CD14-positive monocyte (primary cell): ENCODE measurements at regions of chr16 and their contacts with region 1.

Region 1: GRCh38 chr16:50741808-50742575 is at the start of gene CYLD:
- DNase-seq: peak; percentile 99 to 100 (median 100)
- H3K4me3 ChIP-seq: peak within 1 kb of the TSS; percentile 84 to 92 (median 92)
- H3K4me3 Mint-ChIP-seq: peak within 1 kb of the TSS; percentile 82 to 88
- H3K27ac ChIP-seq: peak within 1 kb of the TSS; percentile 93 to 99
- H3K27ac Mint-ChIP-seq: peak within 1 kb of the TSS; percentile 94 to 98 (median 97)
- H3K4me1 ChIP-seq: peaks cover 25 to 43% of the 10 kb centered on the region in 2 donors
- H3K4me1 Mint-ChIP-seq: peaks cover 48% of the 10 kb centered on the region
- H3K27me3 ChIP-seq: no peaks in the 10 kb centered on the region
- H3K27me3 Mint-ChIP-seq: peaks cover 0 to 2% (median 0%) of the 10 kb centered on the region in 3 donors
- CTCF ChIP-seq: no peak
- polyA plus RNA-seq, gene CYLD: 32.1 to 57.9 (median 35.9) TPM

Region 2: GRCh38 chr16:50273681-50274325 is 468.2 kb before region 1 on chr16:
- intact Hi-C with region 1: loop called in 1 of 2 experiments (anchors 5 kb)
- DNase-seq: peak; percentile 78 to 80 (median 79)
- H3K4me3 ChIP-seq: peak overlapping the region; percentile 67 to 86 (median 68)
- H3K4me3 Mint-ChIP-seq: peak overlapping the region; percentile 99 to 100
- H3K27ac ChIP-seq: peak overlapping the region; percentile 93 to 97
- H3K27ac Mint-ChIP-seq: peak overlapping the region; percentile 98 to 100 (median 100)
- H3K4me1 ChIP-seq: peaks cover 95 to 96% of the 10 kb centered on the region in 2 donors
- H3K4me1 Mint-ChIP-seq: peaks cover 90% of the 10 kb centered on the region
- H3K27me3 ChIP-seq: no peaks in the 10 kb centered on the region
- H3K27me3 Mint-ChIP-seq: no peaks in the 10 kb centered on the region
- CTCF ChIP-seq: no peak

Region 3: DNA sequence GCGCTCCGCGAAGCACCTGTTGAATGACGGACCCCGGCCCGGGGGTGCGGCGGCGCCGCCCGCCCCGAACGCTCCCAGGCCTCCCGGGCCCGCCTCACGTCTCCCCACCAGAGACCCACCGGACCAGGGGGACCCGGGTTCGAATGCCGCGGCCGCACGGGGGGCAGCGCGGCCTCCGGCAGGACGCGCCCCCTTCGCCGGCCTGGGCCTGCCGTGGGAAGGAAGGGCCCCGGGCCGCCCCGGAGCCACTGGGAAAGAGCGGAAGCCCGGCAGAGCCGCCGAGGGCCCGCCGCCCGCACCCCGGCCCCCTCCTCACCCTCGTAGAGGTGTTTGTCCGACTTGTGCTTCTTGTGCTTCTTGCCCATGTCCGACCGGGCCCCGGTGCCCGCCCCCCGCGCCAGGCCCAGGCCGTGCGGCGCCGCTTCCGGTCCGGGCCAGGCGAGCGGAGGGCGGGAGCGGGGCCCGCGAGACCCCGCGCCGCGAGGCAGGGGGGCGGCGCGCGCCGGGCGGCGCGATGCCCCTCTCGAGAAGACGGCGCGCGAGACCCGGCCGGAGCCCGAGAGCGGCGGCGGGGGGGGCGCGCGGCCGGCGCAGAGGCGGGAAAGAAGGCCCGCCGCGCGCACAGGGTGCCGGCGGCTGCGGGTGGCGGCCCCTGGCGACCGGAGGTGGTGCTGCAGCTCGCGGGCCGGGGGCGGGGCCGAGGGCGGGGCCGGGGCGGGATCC is 373.4 kb before region 1 on chr16 and contains the start of gene BRD7:
- intact Hi-C with region 1: loop called in 1 of 2 experiments (anchors 5 kb)
- DNase-seq: peak; percentile 34 to 59 (median 44)
- H3K4me3 ChIP-seq: peak within 1 kb of the TSS; percentile 49 to 95 (median 85)
- H3K4me3 Mint-ChIP-seq: peak within 1 kb of the TSS; percentile 89 to 92
- H3K27ac ChIP-seq: peak within 1 kb of the TSS in 1 of 2 donors; percentile 69
- H3K27ac Mint-ChIP-seq: peak within 1 kb of the TSS; percentile 74 to 95 (median 86)
- H3K4me1 ChIP-seq: peaks cover 32 to 34% of the 10 kb centered on the region in 2 donors
- H3K4me1 Mint-ChIP-seq: peaks cover 37% of the 10 kb centered on the region
- H3K27me3 ChIP-seq: no peaks in the 10 kb centered on the region
- H3K27me3 Mint-ChIP-seq: peaks cover 1 to 6% (median 3%) of the 10 kb centered on the region in 3 donors
- CTCF ChIP-seq: no peak
- polyA plus RNA-seq, gene BRD7: 11.4 to 33.0 (median 21.2) TPM

Region 4: DNA sequence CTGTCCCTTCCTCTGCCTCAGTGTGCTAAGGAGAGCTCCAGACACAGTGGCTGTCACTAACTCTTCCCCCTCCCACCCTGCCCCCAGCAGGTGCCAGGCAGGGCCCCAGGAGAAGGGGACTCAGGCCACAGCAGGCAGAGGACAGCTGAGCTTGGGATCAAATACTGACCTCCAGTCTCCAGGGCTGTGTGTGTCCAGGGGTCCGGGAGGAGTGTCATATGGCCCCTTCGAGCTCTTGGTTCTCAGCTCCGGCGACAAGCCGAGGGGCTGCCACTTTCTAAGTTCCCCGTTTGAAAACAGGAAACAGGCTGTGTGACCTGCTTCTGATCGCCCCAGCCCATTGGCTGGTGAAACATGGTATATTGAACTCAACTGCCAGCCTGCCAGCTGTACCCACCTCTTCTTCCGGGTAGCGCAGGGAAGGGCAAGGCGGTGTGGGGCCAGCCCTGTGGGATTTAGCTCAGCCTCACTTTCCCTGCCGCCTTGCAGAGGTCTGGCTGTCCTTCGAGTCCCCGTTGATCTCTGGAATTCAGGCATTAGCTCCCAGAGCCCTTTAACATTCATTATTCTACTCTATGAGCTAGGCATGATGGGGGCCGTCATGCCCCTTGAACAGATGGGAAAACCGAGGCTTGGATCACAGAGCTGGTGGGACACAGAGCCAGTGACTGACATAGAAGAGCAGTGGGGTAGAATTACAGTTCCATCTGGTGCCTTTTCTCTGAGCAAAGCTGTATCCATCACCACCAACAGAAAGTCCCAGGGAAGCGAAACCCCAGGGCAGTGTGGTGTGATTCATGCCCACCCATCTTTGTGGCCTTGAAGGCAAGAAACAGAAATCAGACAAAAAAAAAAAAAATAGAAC is 60.7 kb before region 1 on chr16 and contains the start of gene SNX20:
- intact Hi-C with region 1: loop called in 1 of 2 experiments (anchors 5 kb)
- DNase-seq: peak; percentile 80 to 90 (median 86)
- H3K4me3 ChIP-seq: peak within 1 kb of the TSS; percentile 51 to 92 (median 84)
- H3K4me3 Mint-ChIP-seq: peak within 1 kb of the TSS; percentile 80 to 95
- H3K27ac ChIP-seq: peak within 1 kb of the TSS; percentile 86 to 100
- H3K27ac Mint-ChIP-seq: peak within 1 kb of the TSS; percentile 96 to 100 (median 98)
- H3K4me1 ChIP-seq: peaks cover 82 to 92% of the 10 kb centered on the region in 2 donors
- H3K4me1 Mint-ChIP-seq: peaks cover 81% of the 10 kb centered on the region
- H3K27me3 ChIP-seq: no peaks in the 10 kb centered on the region
- H3K27me3 Mint-ChIP-seq: peaks cover 0 to 6% (median 2%) of the 10 kb centered on the region in 3 donors
- CTCF ChIP-seq: no peak
- polyA plus RNA-seq, gene SNX20: 51.0 to 83.2 (median 52.0) TPM

Region 5: DNA sequence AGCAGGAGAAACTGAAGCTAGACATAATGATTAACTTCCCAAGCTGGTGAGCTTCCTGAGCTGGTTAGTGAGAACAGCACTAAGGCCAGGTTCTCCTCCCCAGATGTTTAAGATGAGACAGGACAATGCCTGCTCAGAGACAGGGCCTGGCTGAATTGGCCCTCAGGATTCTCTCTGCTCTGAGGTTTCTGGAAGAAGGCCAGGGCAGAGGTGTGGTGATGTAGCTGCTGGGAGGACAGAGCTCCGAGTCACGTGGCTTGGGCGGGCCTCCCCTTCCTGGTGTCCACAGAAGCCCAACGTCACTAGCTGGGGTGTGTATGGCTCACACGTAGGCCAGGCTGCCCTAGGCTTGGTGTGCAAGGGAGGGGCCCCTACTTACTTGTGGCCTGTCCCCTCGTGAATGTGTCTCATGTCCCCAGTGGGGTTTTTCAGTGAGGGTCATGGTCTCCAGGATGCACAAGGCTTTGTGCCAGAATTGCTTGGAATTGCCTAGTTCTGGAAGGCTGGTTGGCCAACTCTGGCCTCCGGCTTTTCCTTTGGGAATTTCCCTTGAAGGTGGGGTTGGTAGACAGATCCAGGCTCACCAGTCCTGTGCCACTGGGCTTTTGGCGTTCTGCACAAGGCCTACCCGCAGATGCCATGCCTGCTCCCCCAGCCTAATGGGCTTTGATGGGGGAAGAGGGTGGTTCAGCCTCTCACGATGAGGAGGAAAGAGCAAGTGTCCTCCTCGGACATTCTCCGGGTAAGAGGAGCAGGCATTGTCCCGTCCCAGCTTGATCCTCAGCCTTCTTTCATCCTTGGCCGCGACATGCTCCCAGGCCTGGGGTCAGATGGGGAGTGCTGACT is 45.2 kb before region 1 on chr16:
- intact Hi-C with region 1: loop called (anchors 5 kb)
- DNase-seq: peak; percentile 98 to 100 (median 99)
- H3K4me3 ChIP-seq: peak overlapping the region in 2 of 3 experiments; percentile 32 to 95
- H3K4me3 Mint-ChIP-seq: peak overlapping the region; percentile 95 to 99
- H3K27ac ChIP-seq: peak overlapping the region; percentile 97 to 100
- H3K27ac Mint-ChIP-seq: peak overlapping the region; percentile 98 to 100 (median 99)
- H3K4me1 ChIP-seq: peaks cover 75 to 89% of the 10 kb centered on the region in 2 donors
- H3K4me1 Mint-ChIP-seq: peaks cover 87% of the 10 kb centered on the region
- H3K27me3 ChIP-seq: no peaks in the 10 kb centered on the region
- H3K27me3 Mint-ChIP-seq: no peaks in the 10 kb centered on the region
- CTCF ChIP-seq: no peak

Region 6: GRCh38 chr16:50719518-50720337 is 22.3 kb before region 1 on chr16:
- intact Hi-C with region 1: no loop called
- DNase-seq: no peak
- H3K4me3 ChIP-seq: no peak overlapping the region
- H3K4me3 Mint-ChIP-seq: no peak overlapping the region
- H3K27ac ChIP-seq: peak overlapping the region; percentile 7 to 58
- H3K27ac Mint-ChIP-seq: peak overlapping the region in 2 of 7 donors; percentile 22 to 28
- H3K4me1 ChIP-seq: peaks cover 24 to 39% of the 10 kb centered on the region in 2 donors
- H3K4me1 Mint-ChIP-seq: peaks cover 44% of the 10 kb centered on the region
- H3K27me3 ChIP-seq: no peaks in the 10 kb centered on the region
- H3K27me3 Mint-ChIP-seq: no peaks in the 10 kb centered on the region
- CTCF ChIP-seq: no peak